ENCODE measurements at regions of chr7 and their contacts with region 1.

Region 1: GRCh38 chr7:16944936-16945335 is 63.2 kb upstream of the AGR3 start:
- DNase-seq: no peak
- H3K4me3 ChIP-seq: no peak overlapping the region
- H3K27ac ChIP-seq: no peak overlapping the region
- H3K4me1 ChIP-seq: no peaks in the 10 kb centered on the region
- H3K27me3 ChIP-seq: no peaks in the 10 kb centered on the region
- CTCF ChIP-seq: no peak
- POLR2A ChIP-seq: no peak

Region 2: GRCh38 chr7:17253885-17254284 is 308.9 kb after region 1 on chr7:
- intact Hi-C with region 1: loop called (anchors 5 kb)
- DNase-seq: no peak
- H3K4me3 ChIP-seq: no peak overlapping the region
- H3K27ac ChIP-seq: no peak overlapping the region
- H3K4me1 ChIP-seq: no peaks in the 10 kb centered on the region
- H3K27me3 ChIP-seq: no peaks in the 10 kb centered on the region
- CTCF ChIP-seq: no peak
- POLR2A ChIP-seq: no peak